Posterior vena cava (tissue), 2 donors: ENCODE measurements at regions of chr2 and their contacts with region 1.

Region 1: GRCh38 chr2:213696442-213696841 is 412.2 kb downstream of the SPAG16 start:
- DNase-seq: no peak

Region 2: GRCh38 chr2:213766465-213766901 is 70.0 kb after region 1 on chr2:
- intact Hi-C with region 1: loop called in 1 of 2 experiments (anchors 2 kb)
- DNase-seq: no peak